ENCODE measurements at regions of chr19 and their contacts with region 1.

Region 1: GRCh38 chr19:17932485-17933338 is at the start of gene CCDC124:
- DNase-seq: peak; percentile 89 to 96 (median 94)
- ATAC-seq: peak; percentile 99
- H3K4me3 ChIP-seq: peak within 1 kb of the TSS; percentile 69
- H3K4me3 Mint-ChIP-seq: peak within 1 kb of the TSS; percentile 85 to 97 (median 93)
- H3K27ac ChIP-seq: peak within 1 kb of the TSS; percentile 86
- H3K27ac Mint-ChIP-seq: peak within 1 kb of the TSS; percentile 90 to 97 (median 95)
- H3K4me1 ChIP-seq: peaks cover 10 to 11% of the 10 kb centered on the region in 2 donors
- H3K4me1 Mint-ChIP-seq: peaks cover 6 to 24% (median 15%) of the 10 kb centered on the region in 7 donors
- H3K27me3 ChIP-seq: no peaks in the 10 kb centered on the region
- H3K27me3 Mint-ChIP-seq: peaks cover 0 to 2% (median 0%) of the 10 kb centered on the region in 5 donors
- total RNA-seq, gene CCDC124: 28.7 to 60.5 (median 32.6) TPM

Region 2: GRCh38 chr19:17605761-17606745 is 326.7 kb before region 1 on chr19:
- CTCF ChIA-PET with region 1: interaction called, 4 read pairs
- POLR2A ChIA-PET with region 1: no interaction called
- intact Hi-C with region 1: loop called in 1 of 2 experiments (anchors 5 kb)
- DNase-seq: peak; percentile 72 to 93 (median 87)
- ATAC-seq: peak; percentile 96
- H3K4me3 ChIP-seq: peak overlapping the region; percentile 63
- H3K4me3 Mint-ChIP-seq: peak overlapping the region; percentile 64 to 91 (median 81)
- H3K27ac ChIP-seq: peak overlapping the region; percentile 48
- H3K27ac Mint-ChIP-seq: peak overlapping the region in 7 of 9 donors; percentile 63 to 84 (median 74)
- H3K4me1 ChIP-seq: peaks cover 2 to 7% of the 10 kb centered on the region in 2 donors
- H3K4me1 Mint-ChIP-seq: peaks cover 0 to 14% (median 10%) of the 10 kb centered on the region in 7 donors
- H3K27me3 ChIP-seq: no peaks in the 10 kb centered on the region
- H3K27me3 Mint-ChIP-seq: peaks cover 29 to 45% (median 33%) of the 10 kb centered on the region in 5 donors

Region 3: DNA sequence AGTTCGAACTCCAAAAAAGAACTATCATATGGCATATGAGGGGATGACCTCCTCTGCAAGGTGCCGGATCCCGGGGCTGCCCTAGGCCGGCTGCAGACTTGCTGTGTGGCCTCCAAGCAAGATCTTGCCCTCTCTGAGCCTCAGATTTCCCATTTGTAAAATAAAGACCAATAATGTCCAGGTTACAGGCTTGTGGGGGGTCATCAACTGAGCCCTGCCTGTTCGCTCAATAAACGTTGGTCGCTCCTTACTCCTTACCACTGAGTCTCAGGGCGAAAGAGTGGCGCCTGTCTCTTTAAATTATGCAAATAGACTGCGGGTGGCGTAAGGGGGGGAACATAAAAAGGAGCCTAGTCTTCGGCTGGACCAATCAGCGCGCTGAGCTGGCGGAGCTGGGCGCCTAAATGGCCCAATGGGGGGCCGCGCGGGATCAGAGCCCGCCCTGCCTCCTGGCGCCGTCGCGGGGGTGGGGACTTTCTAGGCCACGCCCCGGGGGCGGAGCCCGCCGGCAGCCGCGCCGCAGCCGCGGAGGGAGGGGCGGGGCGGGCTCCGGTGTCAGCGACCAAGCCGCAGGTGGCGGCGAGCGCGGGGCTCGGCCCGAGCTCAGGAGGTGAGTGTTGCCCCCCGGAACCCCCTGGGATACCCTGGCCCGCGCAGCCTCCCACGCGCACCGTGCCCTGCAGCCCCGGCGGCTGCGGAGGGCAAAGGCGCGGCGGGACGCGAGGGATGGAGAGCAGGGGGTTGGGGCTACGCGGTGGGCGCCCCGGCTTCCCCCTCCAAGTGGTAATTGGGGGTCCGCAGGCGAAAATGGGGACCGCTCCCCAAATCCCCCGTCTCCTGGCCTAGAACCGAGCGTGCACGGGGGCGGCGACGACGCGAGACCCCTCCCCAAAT is 185.3 kb before region 1 on chr19:
- CTCF ChIA-PET with region 1: no interaction called
- POLR2A ChIA-PET with region 1: no interaction called
- intact Hi-C with region 1: loop called in 1 of 2 experiments (anchors 2 kb)
- DNase-seq: peak; percentile 90 to 99 (median 95)
- ATAC-seq: peak; percentile 96
- H3K4me3 ChIP-seq: peak overlapping the region; percentile 59
- H3K4me3 Mint-ChIP-seq: peak overlapping the region; percentile 87 to 100 (median 94)
- H3K27ac ChIP-seq: peak overlapping the region; percentile 73
- H3K27ac Mint-ChIP-seq: peak overlapping the region; percentile 14 to 88 (median 72)
- H3K4me1 ChIP-seq: peaks cover 31 to 37% of the 10 kb centered on the region in 2 donors
- H3K4me1 Mint-ChIP-seq: peaks cover 35 to 49% (median 39%) of the 10 kb centered on the region in 7 donors
- H3K27me3 ChIP-seq: no peaks in the 10 kb centered on the region
- H3K27me3 Mint-ChIP-seq: no peaks in the 10 kb centered on the region

Region 4: DNA sequence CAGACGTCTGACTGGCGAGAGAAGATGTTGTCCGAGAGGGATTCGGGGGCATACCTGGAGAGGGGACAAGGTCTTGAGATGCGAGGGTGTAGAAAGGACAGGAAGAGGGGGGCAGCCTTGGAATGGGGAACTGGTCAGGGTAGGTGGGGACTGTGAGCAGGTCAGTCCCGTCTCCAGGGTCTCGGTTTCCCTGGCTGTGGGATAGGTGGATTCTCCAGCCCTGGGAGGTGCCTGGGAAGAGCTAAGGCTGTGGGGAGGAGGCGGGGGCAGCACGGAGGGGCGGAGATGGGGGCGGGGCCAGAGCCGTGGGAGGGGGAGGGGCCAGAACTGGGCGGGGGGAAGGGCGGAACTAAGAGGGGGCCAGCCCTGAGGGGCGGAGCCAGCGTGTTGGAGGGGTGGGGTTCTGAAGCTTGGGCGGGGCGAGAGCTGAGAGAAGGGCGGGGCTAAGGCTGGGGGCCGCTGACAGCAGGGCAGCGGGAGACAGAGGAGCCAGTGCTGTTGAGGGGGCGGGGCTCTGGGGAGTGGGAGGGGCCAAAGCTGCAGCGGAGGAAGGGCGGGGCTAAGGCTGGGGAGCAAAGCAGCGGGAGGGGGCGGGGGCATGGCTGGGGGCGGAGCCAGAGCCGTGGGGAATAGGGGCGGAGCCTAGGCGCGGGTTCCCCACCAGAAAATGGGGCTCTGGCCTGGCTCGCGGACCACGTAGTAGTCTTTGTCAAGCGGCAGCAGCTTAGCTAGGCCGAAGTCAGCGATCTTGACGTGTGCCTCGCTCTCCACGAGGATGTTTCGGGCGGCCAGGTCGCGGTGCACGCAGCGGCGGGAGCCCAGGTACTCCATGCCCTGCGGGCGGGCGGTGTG is 101.9 kb before region 1 on chr19:
- CTCF ChIA-PET with region 1: no interaction called
- POLR2A ChIA-PET with region 1: no interaction called
- intact Hi-C with region 1: no loop called
- DNase-seq: peak in 8 of 9 donors; percentile 21 to 66 (median 36)
- ATAC-seq: peak; percentile 88
- H3K4me3 ChIP-seq: no peak overlapping the region
- H3K4me3 Mint-ChIP-seq: no peak overlapping the region
- H3K27ac ChIP-seq: peak overlapping the region; percentile 21
- H3K27ac Mint-ChIP-seq: peak overlapping the region in 3 of 9 donors; percentile 7 to 59 (median 22)
- H3K4me1 ChIP-seq: no peaks in the 10 kb centered on the region
- H3K4me1 Mint-ChIP-seq: peaks cover 6 to 26% (median 11%) of the 10 kb centered on the region in 7 donors
- H3K27me3 ChIP-seq: no peaks in the 10 kb centered on the region
- H3K27me3 Mint-ChIP-seq: no peaks in the 10 kb centered on the region

Region 5: GRCh38 chr19:17873786-17874757 is 58.6 kb before region 1 on chr19:
- CTCF ChIA-PET with region 1: interaction called, 11 read pairs
- POLR2A ChIA-PET with region 1: interaction called, 24 read pairs
- intact Hi-C with region 1: loop called in 1 of 2 experiments (anchors 1 kb)
- DNase-seq: peak; percentile 42 to 75 (median 68)
- ATAC-seq: peak; percentile 92
- H3K4me3 ChIP-seq: peak overlapping the region; percentile 64
- H3K4me3 Mint-ChIP-seq: peak overlapping the region; percentile 73 to 88 (median 84)
- H3K27ac ChIP-seq: peak overlapping the region; percentile 47
- H3K27ac Mint-ChIP-seq: peak overlapping the region; percentile 18 to 85 (median 74)
- H3K4me1 ChIP-seq: peaks cover 10 to 11% of the 10 kb centered on the region in 2 donors
- H3K4me1 Mint-ChIP-seq: peaks cover 0 to 30% (median 10%) of the 10 kb centered on the region in 7 donors
- H3K27me3 ChIP-seq: no peaks in the 10 kb centered on the region
- H3K27me3 Mint-ChIP-seq: peaks cover 0 to 2% (median 0%) of the 10 kb centered on the region in 5 donors

Region 6: GRCh38 chr19:18152444-18152816 is 219.7 kb after region 1 on chr19:
- CTCF ChIA-PET with region 1: interaction called, 3 read pairs
- POLR2A ChIA-PET with region 1: no interaction called
- intact Hi-C with region 1: loop called in 1 of 2 experiments (anchors 10 kb)
- DNase-seq: peak; percentile 92 to 99 (median 97)
- ATAC-seq: peak; percentile 76
- H3K4me3 ChIP-seq: peak overlapping the region; percentile 82
- H3K4me3 Mint-ChIP-seq: peak overlapping the region; percentile 81 to 95 (median 88)
- H3K27ac ChIP-seq: peak overlapping the region; percentile 88
- H3K27ac Mint-ChIP-seq: peak overlapping the region; percentile 89 to 97 (median 95)
- H3K4me1 ChIP-seq: peaks cover 16 to 20% of the 10 kb centered on the region in 2 donors
- H3K4me1 Mint-ChIP-seq: peaks cover 9 to 32% (median 24%) of the 10 kb centered on the region in 7 donors
- H3K27me3 ChIP-seq: no peaks in the 10 kb centered on the region
- H3K27me3 Mint-ChIP-seq: no peaks in the 10 kb centered on the region

Measured in naive thymus-derived CD4-positive, alpha-beta T cell (primary cell).